ENCODE measurements at regions of chr3 and their contacts with region 1.

Region 1: GRCh38 chr3:15205934-15206661 is at the start of gene CAPN7:
- DNase-seq: peak; percentile 94
- H3K4me3 Mint-ChIP-seq: peak within 1 kb of the TSS; percentile 91
- H3K27ac Mint-ChIP-seq: peak within 1 kb of the TSS; percentile 86
- H3K4me1 Mint-ChIP-seq: peaks cover 27% of the 10 kb centered on the region
- H3K27me3 Mint-ChIP-seq: peaks cover 1% of the 10 kb centered on the region
- total RNA-seq, gene CAPN7: 26.0 and 28.6 TPM in 2 replicates

Region 2: DNA sequence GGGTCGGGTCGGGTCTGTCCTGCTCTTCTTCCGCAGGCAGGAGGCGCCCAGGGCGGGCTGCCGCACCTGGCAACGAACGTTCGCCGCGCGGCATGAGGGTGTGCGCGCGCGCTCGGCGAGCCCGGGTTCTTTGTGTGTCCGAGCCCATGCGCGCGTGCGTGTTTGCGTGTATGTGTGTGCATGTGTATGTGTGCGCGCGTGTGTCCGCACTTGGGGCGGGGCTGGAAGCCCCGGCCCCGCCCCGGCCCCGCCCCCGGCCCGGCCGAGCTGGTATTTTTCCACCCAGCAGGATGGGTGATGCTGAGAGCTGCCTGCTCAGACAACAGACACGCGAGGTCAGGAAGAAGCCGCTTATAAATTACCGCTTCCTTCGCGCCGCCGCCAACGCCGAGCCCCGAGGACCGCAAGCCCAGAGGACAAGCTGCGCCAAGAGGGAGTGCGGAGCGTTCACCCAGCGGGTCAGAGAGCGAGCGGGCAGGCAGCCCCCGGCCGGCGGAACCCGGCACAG is 803.7 kb before region 1 on chr3 and contains the start of gene SLC6A6:
- intact Hi-C with region 1: loop called (anchors 10 kb)
- DNase-seq: peak; percentile 92
- H3K4me3 Mint-ChIP-seq: peak within 1 kb of the TSS; percentile 97
- H3K27ac Mint-ChIP-seq: peak within 1 kb of the TSS; percentile 96
- H3K4me1 Mint-ChIP-seq: peaks cover 42% of the 10 kb centered on the region
- H3K27me3 Mint-ChIP-seq: peaks cover 3% of the 10 kb centered on the region
- total RNA-seq, gene SLC6A6: 45.4 and 51.2 TPM in 2 replicates

Region 3: GRCh38 chr3:15098503-15099363 is 107.4 kb before region 1 on chr3 and contains the start of gene RBSN:
- intact Hi-C with region 1: loop called (anchors 1 kb)
- DNase-seq: peak; percentile 95
- H3K4me3 Mint-ChIP-seq: peak within 1 kb of the TSS; percentile 92
- H3K27ac Mint-ChIP-seq: peak within 1 kb of the TSS; percentile 98
- H3K4me1 Mint-ChIP-seq: peaks cover 22% of the 10 kb centered on the region
- H3K27me3 Mint-ChIP-seq: peaks cover 2% of the 10 kb centered on the region
- total RNA-seq, gene RBSN: 11.7 and 12.5 TPM in 2 replicates

Region 4: DNA sequence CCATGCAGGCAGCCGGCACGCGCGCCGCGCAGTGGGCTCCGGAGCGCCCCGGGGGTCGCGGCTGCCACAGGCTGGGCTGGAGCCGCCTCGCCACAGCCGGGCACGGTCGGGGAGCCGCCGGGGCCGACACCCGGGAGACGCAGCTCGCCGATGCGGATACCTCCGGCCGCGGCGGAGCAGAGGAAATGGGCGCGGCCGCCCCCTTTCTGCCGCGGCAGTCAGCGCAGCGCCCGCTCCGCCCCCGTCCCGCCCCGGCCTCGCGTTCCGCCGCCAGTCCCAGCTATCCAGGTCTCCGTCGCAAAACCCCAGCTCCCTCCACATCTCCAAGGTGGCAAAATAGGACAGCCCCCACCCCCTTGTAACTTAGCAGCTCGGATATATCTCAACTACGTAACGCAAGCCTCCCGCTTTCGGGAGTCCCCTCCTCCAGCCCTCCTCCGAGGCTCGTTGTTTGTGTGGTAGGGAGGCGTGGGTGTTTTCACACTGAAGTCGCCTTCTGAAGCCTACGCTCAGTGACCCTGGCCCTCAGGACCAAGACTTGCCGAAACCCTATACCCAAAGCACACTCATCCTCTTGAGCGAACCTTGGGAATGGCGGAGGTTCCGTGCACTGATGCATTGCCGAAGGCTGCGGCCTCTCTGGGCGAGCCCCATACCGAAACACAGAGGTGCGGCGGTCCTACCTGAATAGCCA is 126.5 kb after region 1 on chr3 and contains the start of gene SH3BP5:
- intact Hi-C with region 1: loop called (anchors 2 kb)
- DNase-seq: peak; percentile 73
- H3K4me3 Mint-ChIP-seq: peak within 1 kb of the TSS; percentile 94
- H3K27ac Mint-ChIP-seq: peak within 1 kb of the TSS; percentile 89
- H3K4me1 Mint-ChIP-seq: peaks cover 72% of the 10 kb centered on the region
- H3K27me3 Mint-ChIP-seq: no peaks in the 10 kb centered on the region
- total RNA-seq, gene SH3BP5: 28.0 and 30.3 TPM in 2 replicates

Region 5: DNA sequence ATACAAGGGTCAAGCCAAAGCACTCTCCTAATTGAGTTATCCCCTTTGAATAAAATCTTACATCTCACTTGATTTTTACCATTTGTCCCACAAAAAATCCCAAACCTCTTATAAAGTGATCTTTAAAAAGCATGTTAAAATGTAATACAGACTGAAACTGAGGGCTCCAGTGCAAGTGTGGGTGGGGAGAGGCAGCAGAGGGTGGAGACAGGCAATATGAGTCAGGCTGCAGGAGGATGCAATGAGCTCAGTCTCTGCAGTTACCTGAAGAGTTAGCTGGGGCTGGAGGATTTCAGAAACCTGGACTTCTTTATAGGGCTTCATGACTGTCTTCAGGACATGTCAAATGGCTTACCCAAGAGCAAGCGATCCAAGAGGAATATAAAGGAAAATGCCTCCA is 329.6 kb after region 1 on chr3:
- intact Hi-C with region 1: loop called (anchors 2 kb)
- DNase-seq: peak; percentile 32
- H3K4me3 Mint-ChIP-seq: peak overlapping the region; percentile 60
- H3K27ac Mint-ChIP-seq: peak overlapping the region; percentile 75
- H3K4me1 Mint-ChIP-seq: peaks cover 55% of the 10 kb centered on the region
- H3K27me3 Mint-ChIP-seq: no peaks in the 10 kb centered on the region

Region 6: GRCh38 chr3:15815696-15816095 is 609.6 kb after region 1 on chr3:
- intact Hi-C with region 1: loop called (anchors 5 kb)
- DNase-seq: no peak
- H3K4me3 Mint-ChIP-seq: no peak overlapping the region
- H3K27ac Mint-ChIP-seq: no peak overlapping the region
- H3K4me1 Mint-ChIP-seq: peaks cover 57% of the 10 kb centered on the region
- H3K27me3 Mint-ChIP-seq: no peaks in the 10 kb centered on the region

Region 7: GRCh38 chr3:16264708-16265454 is 1058.8 kb after region 1 on chr3 and contains the starts of genes DPH3 and OXNAD1:
- intact Hi-C with region 1: loop called (anchors 2 kb)
- DNase-seq: peak; percentile 99
- H3K4me3 Mint-ChIP-seq: peak within 1 kb of the TSS; percentile 97
- H3K27ac Mint-ChIP-seq: peak within 1 kb of the TSS; percentile 100
- H3K4me1 Mint-ChIP-seq: peaks cover 35% of the 10 kb centered on the region
- H3K27me3 Mint-ChIP-seq: no peaks in the 10 kb centered on the region
- total RNA-seq, gene DPH3: 28.1 and 36.6 TPM in 2 replicates
- total RNA-seq, gene OXNAD1: 29.5 and 31.1 TPM in 2 replicates

Measured in activated T-helper 1 cell treated with anti-CD3 and anti-CD28 coated beads, Interleukin-12 subunit alpha, Interleukin-12 subunit beta, Interleukin-2, Interleukin-4 antibody, amounts not matched to agents 30 ng/mL and 10 ng/mL and 1 ng/mL, durations not matched to agents 14 hours and 24 hours and 36 hours (primary cell).